B cell (primary cell): ENCODE measurements at regions of chr2 and their contacts with region 1.

Region 1: GRCh38 chr2:133171393-133172004 is 396.8 kb downstream of the NCKAP5 start:
- DNase-seq: peak; percentile 23
- ATAC-seq: no peak
- H3K4me3 ChIP-seq: no peak overlapping the region
- H3K4me3 Mint-ChIP-seq: no peak overlapping the region
- H3K27ac ChIP-seq: no peak overlapping the region
- H3K27ac Mint-ChIP-seq: no peak overlapping the region
- H3K4me1 ChIP-seq: no peaks in the 10 kb centered on the region
- H3K4me1 Mint-ChIP-seq: no peaks in the 10 kb centered on the region
- H3K27me3 ChIP-seq: no peaks in the 10 kb centered on the region
- H3K27me3 Mint-ChIP-seq: peaks cover 15% of the 10 kb centered on the region
- CTCF ChIP-seq: peak; percentile 52

Region 2: DNA sequence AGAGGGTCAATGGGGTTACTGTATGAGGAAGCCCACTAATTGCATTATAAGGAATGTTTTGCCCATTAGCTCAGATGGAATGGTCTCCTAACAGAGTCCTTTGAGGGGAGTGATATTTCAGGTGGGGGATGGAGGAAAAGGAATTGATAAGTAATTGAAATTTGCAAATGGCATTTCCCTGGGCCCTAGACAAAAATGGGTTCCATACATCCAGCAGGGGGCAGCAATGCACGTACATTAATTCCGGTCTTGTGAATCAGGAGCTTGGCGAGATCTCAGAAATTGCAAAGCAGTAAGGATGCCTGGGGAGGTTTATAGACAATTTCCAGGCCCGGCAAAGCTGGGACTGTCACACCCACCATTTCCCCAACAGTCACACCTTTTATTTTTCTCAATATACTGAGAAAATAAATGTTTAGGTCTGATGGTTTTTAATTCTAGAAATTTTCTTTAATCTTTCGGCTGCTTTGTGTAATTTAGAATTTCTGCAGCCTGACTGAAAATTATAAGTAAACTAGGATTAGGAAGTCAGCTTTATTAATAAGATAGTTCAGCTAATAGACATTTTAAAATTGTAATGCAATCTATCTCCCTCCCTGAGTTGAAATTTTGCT is 624.3 kb before region 1 on chr2:
- CTCF ChIA-PET with region 1: interaction called, 21 read pairs
- POLR2A ChIA-PET with region 1: no interaction called
- intact Hi-C with region 1: no loop called
- DNase-seq: peak; percentile 52
- ATAC-seq: no peak
- H3K4me3 ChIP-seq: no peak overlapping the region
- H3K4me3 Mint-ChIP-seq: no peak overlapping the region
- H3K27ac ChIP-seq: no peak overlapping the region
- H3K27ac Mint-ChIP-seq: no peak overlapping the region
- H3K4me1 ChIP-seq: no peaks in the 10 kb centered on the region
- H3K4me1 Mint-ChIP-seq: no peaks in the 10 kb centered on the region
- H3K27me3 ChIP-seq: no peaks in the 10 kb centered on the region
- H3K27me3 Mint-ChIP-seq: no peaks in the 10 kb centered on the region
- CTCF ChIP-seq: peak; percentile 74